Activated naive CD4-positive, alpha-beta T cell treated with anti-CD3 and anti-CD28 coated beads for 36 hours (primary cell): ENCODE measurements at regions of chr3 and their contacts with region 1.

Region 1: GRCh38 chr3:44104668-44105321 is 136.9 kb upstream of the TOPAZ1 start:
- DNase-seq: peak; percentile 79
- H3K4me3 Mint-ChIP-seq: no peak overlapping the region
- H3K27ac Mint-ChIP-seq: no peak overlapping the region
- H3K4me1 Mint-ChIP-seq: peaks cover 14% of the 10 kb centered on the region
- H3K27me3 Mint-ChIP-seq: peaks cover 5% of the 10 kb centered on the region

Region 2: DNA sequence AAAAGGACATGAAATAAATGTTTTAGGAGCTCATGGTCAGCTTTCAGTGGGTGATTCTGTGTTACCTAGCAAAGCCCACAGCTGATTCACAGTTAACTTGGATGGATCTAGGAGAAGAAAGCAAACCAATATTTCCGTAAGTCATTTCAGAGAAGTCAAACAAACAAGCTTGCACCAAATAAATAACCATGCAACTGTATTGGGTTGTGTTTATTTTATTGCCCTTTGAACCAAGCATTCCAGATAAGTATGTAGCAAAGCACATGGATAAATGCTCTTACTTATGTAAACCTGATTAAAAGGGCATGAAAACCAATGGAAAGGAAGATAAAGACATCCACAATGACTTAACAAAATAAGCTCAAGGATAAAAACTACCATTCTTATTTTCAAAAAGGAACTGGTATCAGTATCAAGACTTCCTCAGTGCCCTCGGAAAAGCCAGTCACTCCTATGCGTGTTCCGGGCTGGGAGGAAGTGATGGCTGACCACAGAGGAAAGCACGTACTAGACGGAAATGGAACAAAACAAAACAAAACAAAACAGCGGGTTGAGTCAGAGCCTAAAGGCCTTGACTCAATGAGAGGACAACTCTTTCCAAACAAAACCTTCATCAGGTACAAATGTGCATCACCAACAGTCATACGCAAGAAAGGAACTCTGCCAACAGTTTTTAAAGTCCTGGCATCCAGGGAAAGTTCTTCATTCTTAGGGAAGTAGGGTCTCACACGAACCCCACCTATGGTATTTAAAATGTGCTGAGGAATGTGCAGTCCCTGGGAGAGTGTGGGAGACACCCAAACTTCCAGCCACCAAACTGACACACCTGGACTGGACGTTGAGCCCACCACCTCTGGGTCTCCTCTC is 715.2 kb before region 1 on chr3:
- CTCF ChIA-PET with region 1: no interaction called
- intact Hi-C with region 1: no loop called
- DNase-seq: peak; percentile 87
- H3K4me3 Mint-ChIP-seq: peak overlapping the region; percentile 9
- H3K27ac Mint-ChIP-seq: peak overlapping the region; percentile 55
- H3K4me1 Mint-ChIP-seq: peaks cover 63% of the 10 kb centered on the region
- H3K27me3 Mint-ChIP-seq: no peaks in the 10 kb centered on the region

Region 3: DNA sequence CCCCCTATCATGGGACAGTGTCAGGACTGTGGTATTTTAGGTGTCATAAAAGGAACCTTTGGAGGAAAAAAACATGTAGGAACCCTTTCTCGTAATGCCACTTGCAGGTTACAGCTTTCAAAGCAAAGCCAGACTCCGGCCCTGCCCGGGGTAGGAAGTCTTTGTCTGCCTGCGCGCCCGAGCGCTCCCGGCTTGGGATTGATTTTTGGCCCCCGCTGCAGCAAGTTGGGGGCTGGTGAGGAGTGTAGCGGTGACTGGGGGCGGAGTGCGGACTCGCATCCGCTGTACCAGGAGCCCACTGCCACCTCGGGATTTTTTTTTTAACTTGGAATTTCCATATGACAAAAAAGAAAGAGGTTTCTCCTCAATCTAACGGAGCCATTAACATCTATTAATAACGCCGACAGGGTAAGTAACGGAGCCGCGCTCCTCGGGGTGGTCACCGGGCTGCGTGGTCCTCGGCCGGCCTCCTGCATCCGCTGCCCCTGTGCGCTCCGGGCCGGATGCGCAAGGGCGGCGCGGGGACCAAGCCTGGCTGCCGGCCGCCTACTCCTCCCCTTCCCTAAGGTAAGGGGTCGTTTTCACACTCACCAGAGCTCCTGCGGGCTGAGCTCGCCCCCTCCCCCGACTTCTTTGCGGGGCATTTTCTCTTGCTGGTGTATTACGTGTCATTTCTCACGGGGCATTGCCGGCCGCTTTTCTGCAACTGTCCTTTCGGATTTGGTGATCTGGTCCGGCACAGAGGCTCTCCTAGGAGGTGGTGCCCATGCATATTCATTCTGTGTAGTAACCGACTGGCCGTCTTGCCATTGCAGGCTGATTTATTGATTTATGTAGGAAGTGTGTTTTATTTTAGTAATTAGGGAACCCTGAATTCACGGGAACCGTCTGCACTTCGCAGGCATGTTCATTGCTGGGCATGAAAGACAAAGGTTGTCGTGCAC is 82.9 kb before region 1 on chr3:
- CTCF ChIA-PET with region 1: no interaction called
- intact Hi-C with region 1: no loop called
- DNase-seq: no peak
- H3K4me3 Mint-ChIP-seq: no peak overlapping the region
- H3K27ac Mint-ChIP-seq: no peak overlapping the region
- H3K4me1 Mint-ChIP-seq: peaks cover 4% of the 10 kb centered on the region
- H3K27me3 Mint-ChIP-seq: peaks cover 33% of the 10 kb centered on the region

Region 4: GRCh38 chr3:44058022-44058867 is 46.5 kb before region 1 on chr3:
- CTCF ChIA-PET with region 1: no interaction called
- intact Hi-C with region 1: loop called (anchors 1 kb)
- DNase-seq: peak; percentile 64
- H3K4me3 Mint-ChIP-seq: peak overlapping the region; percentile 62
- H3K27ac Mint-ChIP-seq: peak overlapping the region; percentile 67
- H3K4me1 Mint-ChIP-seq: peaks cover 32% of the 10 kb centered on the region
- H3K27me3 Mint-ChIP-seq: peaks cover 6% of the 10 kb centered on the region

Region 5: DNA sequence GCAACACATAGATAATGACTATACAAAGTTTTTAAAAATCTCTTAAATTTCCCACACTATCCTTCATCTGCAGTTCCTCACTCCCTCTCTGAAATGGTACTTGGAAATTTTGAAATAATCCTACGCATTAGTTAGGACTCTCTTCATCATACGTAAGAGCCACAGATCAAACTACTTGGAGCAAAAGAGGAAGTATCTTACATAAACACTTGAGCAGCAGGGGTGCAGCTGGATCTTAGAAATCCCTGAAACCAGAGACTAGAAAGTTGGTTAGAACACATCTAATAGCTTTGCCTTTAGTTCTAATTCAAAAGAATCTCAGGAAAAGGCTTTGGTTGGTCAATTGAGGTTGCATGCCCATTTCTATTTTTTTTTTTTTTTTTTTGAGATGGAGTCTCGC is 411.4 kb after region 1 on chr3:
- CTCF ChIA-PET with region 1: no interaction called
- intact Hi-C with region 1: no loop called
- DNase-seq: no peak
- H3K4me3 Mint-ChIP-seq: no peak overlapping the region
- H3K27ac Mint-ChIP-seq: no peak overlapping the region
- H3K4me1 Mint-ChIP-seq: peaks cover 10% of the 10 kb centered on the region
- H3K27me3 Mint-ChIP-seq: peaks cover 9% of the 10 kb centered on the region

Region 6: GRCh38 chr3:44729384-44729910 is 624.7 kb after region 1 on chr3 and contains the start of gene ZNF501:
- CTCF ChIA-PET with region 1: no interaction called
- intact Hi-C with region 1: no loop called
- DNase-seq: peak; percentile 94
- H3K4me3 Mint-ChIP-seq: peak within 1 kb of the TSS; percentile 90
- H3K27ac Mint-ChIP-seq: peak within 1 kb of the TSS; percentile 73
- H3K4me1 Mint-ChIP-seq: peaks cover 9% of the 10 kb centered on the region
- H3K27me3 Mint-ChIP-seq: no peaks in the 10 kb centered on the region
- total RNA-seq, gene ZNF501: 1.6 to 2.7 TPM